ENCODE measurements at regions of chr6 and their contacts with region 1.

Region 1: DNA sequence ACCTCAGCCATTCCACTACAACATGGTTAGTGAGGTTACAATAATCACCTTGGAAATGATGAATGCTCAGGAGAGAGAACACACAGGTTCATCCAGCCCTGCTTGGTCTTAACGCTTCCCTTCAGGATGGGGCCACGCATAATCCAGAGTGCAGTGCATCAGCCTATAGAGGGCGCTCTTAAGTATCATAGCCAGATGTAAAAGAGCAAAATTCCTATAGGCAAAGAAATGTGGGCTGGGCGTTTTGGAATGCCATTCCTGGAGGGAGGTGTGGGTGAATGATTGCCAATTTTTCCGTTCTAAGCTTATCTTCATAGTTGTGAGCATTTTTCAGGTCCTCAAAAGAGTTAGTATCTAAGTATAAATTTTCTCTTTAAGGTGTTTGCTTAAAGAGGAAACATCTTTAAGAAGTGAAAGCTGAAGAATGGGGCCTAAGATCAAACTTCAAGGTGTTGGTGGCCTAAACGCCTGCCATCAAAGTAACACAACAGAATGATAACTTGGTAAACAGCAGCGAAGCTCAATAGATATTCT is 1.8 kb downstream of the RIPOR2 start:
- DNase-seq: peak; percentile 63 to 74 (median 68)
- H3K4me3 ChIP-seq: peak overlapping the region; percentile 96 to 100
- H3K4me3 Mint-ChIP-seq: peak overlapping the region; percentile 96 to 100 (median 99)
- H3K27ac ChIP-seq: peak overlapping the region; percentile 78
- H3K27ac Mint-ChIP-seq: peak overlapping the region; percentile 87 to 96 (median 94)
- H3K4me1 ChIP-seq: peaks cover 55% of the 10 kb centered on the region
- H3K4me1 Mint-ChIP-seq: peaks cover 39 to 68% (median 51%) of the 10 kb centered on the region in 4 donors
- H3K27me3 ChIP-seq: no peaks in the 10 kb centered on the region
- H3K27me3 Mint-ChIP-seq: no peaks in the 10 kb centered on the region

Region 2: GRCh38 chr6:24883618-24884017 is 50.3 kb before region 1 on chr6:
- CTCF ChIA-PET with region 1: interaction called, 34 read pairs
- POLR2A ChIA-PET with region 1: interaction called, 14 read pairs
- intact Hi-C with region 1: no loop called
- DNase-seq: peak in 1 of 5 donors; percentile 64
- H3K4me3 ChIP-seq: no peak overlapping the region
- H3K4me3 Mint-ChIP-seq: peak overlapping the region in 6 of 8 donors; percentile 28 to 80 (median 68)
- H3K27ac ChIP-seq: peak overlapping the region; percentile 42
- H3K27ac Mint-ChIP-seq: peak overlapping the region; percentile 49 to 94 (median 88)
- H3K4me1 ChIP-seq: peaks cover 96% of the 10 kb centered on the region
- H3K4me1 Mint-ChIP-seq: peaks cover 59 to 97% (median 80%) of the 10 kb centered on the region in 4 donors
- H3K27me3 ChIP-seq: no peaks in the 10 kb centered on the region
- H3K27me3 Mint-ChIP-seq: no peaks in the 10 kb centered on the region

Region 3: GRCh38 chr6:24919004-24919892 is 14.7 kb before region 1 on chr6:
- CTCF ChIA-PET with region 1: interaction called, 245 read pairs
- POLR2A ChIA-PET with region 1: interaction called, 734 read pairs
- intact Hi-C with region 1: loop called (anchors 1 kb)
- DNase-seq: no peak
- H3K4me3 ChIP-seq: peak overlapping the region in 1 of 2 donors; percentile 29
- H3K4me3 Mint-ChIP-seq: peak overlapping the region; percentile 67 to 88 (median 85)
- H3K27ac ChIP-seq: peak overlapping the region; percentile 45
- H3K27ac Mint-ChIP-seq: peak overlapping the region; percentile 81 to 95 (median 89)
- H3K4me1 ChIP-seq: peaks cover 98% of the 10 kb centered on the region
- H3K4me1 Mint-ChIP-seq: peaks cover 72 to 97% (median 86%) of the 10 kb centered on the region in 4 donors
- H3K27me3 ChIP-seq: no peaks in the 10 kb centered on the region
- H3K27me3 Mint-ChIP-seq: no peaks in the 10 kb centered on the region

Region 4: DNA sequence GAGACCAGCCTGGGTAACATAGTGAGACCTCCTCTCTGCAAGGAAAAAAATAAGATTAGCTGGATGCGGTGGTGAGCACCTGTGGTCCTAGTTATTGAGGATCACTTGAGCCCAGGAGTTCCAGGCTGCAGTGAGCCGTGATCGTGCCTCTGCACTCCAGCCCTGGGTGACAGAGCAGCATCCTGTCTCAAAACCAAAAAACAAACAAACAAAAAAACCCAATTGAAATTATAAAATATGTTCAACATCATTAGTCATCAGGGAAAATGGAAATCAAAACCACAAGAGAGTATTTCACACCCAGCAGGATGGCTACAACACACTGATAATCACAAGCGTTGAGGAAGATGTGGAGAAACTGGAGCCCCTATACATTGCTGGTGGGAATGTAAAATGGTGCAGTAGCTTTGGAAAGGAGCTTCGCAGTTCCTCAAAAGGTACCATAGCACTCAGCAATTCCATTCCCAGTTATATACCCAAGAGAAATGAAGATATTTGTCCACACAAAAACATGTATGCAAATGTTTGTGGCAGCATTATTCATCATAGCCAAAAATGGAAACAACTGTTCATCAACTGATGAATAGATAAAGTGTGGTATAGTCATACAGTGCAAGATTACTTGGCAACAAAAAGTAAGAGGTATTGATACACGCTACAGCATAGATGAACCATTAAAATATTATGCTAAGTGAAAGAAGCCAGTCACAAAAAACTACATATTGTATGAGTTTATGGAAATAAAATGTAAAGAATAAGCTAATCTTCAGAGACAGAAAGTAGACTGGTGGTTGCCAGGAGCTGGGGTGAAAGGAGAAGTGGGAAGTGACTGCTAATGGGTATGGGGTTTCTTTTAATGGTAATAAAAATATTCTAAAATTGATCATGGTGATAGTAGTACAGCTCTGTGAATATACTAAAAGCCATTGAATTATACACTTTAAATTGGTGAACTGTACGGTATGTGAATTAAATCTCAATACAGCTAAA is 40.5 kb after region 1 on chr6:
- CTCF ChIA-PET with region 1: interaction called, 153 read pairs
- POLR2A ChIA-PET with region 1: interaction called, 1,351 read pairs
- intact Hi-C with region 1: loop called (anchors 1 kb)
- DNase-seq: peak; percentile 46 to 73 (median 55)
- H3K4me3 ChIP-seq: peak overlapping the region in 1 of 2 donors; percentile 7
- H3K4me3 Mint-ChIP-seq: peak overlapping the region; percentile 66 to 78 (median 71)
- H3K27ac ChIP-seq: peak overlapping the region; percentile 49
- H3K27ac Mint-ChIP-seq: peak overlapping the region; percentile 91 to 97 (median 94)
- H3K4me1 ChIP-seq: peaks cover 67% of the 10 kb centered on the region
- H3K4me1 Mint-ChIP-seq: peaks cover 49 to 85% (median 72%) of the 10 kb centered on the region in 4 donors
- H3K27me3 ChIP-seq: no peaks in the 10 kb centered on the region
- H3K27me3 Mint-ChIP-seq: no peaks in the 10 kb centered on the region

Region 5: GRCh38 chr6:25017932-25018567 is 84.1 kb after region 1 on chr6:
- CTCF ChIA-PET with region 1: interaction called, 64 read pairs
- POLR2A ChIA-PET with region 1: interaction called, 37 read pairs
- intact Hi-C with region 1: no loop called
- DNase-seq: peak; percentile 77 to 87 (median 79)
- H3K4me3 ChIP-seq: no peak overlapping the region
- H3K4me3 Mint-ChIP-seq: peak overlapping the region in 5 of 8 donors; percentile 21 to 64 (median 40)
- H3K27ac ChIP-seq: no peak overlapping the region
- H3K27ac Mint-ChIP-seq: peak overlapping the region; percentile 74 to 93 (median 88)
- H3K4me1 ChIP-seq: peaks cover 48% of the 10 kb centered on the region
- H3K4me1 Mint-ChIP-seq: peaks cover 36 to 59% (median 38%) of the 10 kb centered on the region in 4 donors
- H3K27me3 ChIP-seq: no peaks in the 10 kb centered on the region
- H3K27me3 Mint-ChIP-seq: no peaks in the 10 kb centered on the region

Region 6: GRCh38 chr6:25070547-25071366 is 136.8 kb after region 1 on chr6:
- CTCF ChIA-PET with region 1: interaction called, 26 read pairs
- POLR2A ChIA-PET with region 1: interaction called, 3 read pairs
- intact Hi-C with region 1: loop called (anchors 1 kb)
- DNase-seq: peak; percentile 84 to 85 (median 85)
- H3K4me3 ChIP-seq: no peak overlapping the region
- H3K4me3 Mint-ChIP-seq: peak overlapping the region in 7 of 8 donors; percentile 5 to 74 (median 48)
- H3K27ac ChIP-seq: no peak overlapping the region
- H3K27ac Mint-ChIP-seq: peak overlapping the region; percentile 80 to 94 (median 84)
- H3K4me1 ChIP-seq: no peaks in the 10 kb centered on the region
- H3K4me1 Mint-ChIP-seq: peaks cover 4 to 8% (median 6%) of the 10 kb centered on the region in 4 donors
- H3K27me3 ChIP-seq: no peaks in the 10 kb centered on the region
- H3K27me3 Mint-ChIP-seq: no peaks in the 10 kb centered on the region

Region 7: DNA sequence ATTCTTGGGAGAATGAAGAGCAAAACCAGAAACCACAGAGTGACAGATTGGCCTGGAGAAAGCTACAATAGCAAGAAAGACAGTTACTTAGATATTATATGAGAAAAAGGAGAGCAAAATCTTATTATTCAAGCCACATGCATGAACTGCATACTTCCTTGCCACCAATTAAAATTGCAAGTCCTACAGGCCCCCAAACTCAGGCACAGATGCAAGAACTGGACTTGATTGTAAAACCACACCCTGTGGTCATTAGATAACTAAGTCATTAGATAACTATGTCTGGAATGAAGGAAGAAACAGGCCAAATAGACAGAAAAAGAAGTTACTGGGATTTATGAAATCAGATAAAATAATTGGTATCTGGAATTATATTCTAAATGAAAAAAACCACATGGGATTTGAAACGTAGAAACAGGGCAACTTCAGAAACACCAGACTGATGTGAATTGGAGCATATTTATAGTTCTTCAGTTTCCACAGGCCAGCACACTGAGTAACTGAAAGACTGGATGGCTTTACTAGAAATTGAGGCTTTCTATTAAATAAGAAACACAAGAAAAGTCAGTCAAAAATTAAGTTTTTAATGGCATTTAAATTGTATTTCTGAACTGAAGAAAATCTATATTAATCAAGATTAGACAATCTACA is 295.9 kb after region 1 on chr6:
- CTCF ChIA-PET with region 1: no interaction called
- POLR2A ChIA-PET with region 1: no interaction called
- intact Hi-C with region 1: no loop called
- DNase-seq: no peak
- H3K4me3 ChIP-seq: no peak overlapping the region
- H3K4me3 Mint-ChIP-seq: no peak overlapping the region
- H3K27ac ChIP-seq: no peak overlapping the region
- H3K27ac Mint-ChIP-seq: no peak overlapping the region
- H3K4me1 ChIP-seq: no peaks in the 10 kb centered on the region
- H3K4me1 Mint-ChIP-seq: no peaks in the 10 kb centered on the region
- H3K27me3 ChIP-seq: no peaks in the 10 kb centered on the region
- H3K27me3 Mint-ChIP-seq: peaks cover 1 to 2% of the 10 kb centered on the region in 2 donors